Posterior vena cava (tissue), 2 donors: ENCODE measurements at regions of chr9 and their contacts with region 1.

Region 1: DNA sequence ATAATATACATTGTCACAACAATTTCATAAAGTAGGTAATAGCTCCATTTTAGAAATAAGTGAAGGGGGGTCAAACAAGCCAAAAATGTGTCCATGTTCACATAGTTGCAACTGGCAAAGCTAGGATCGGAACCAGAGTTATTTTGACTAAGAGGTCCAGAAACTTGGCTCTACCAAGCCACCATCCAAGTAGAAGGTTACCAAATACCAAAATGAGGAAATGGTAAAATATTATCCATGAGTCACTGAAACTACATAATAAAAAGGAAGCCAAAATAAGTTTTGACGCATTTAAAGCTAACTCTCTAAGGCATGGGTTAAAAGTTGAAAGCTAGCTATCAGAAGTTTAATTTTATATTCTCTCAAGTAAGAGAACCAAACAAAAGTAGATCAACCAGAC is 886.9 kb upstream of the DMAC1 start:
- DNase-seq: no peak

Region 2: GRCh38 chr9:8622871-8623270 is 63.6 kb before region 1 on chr9:
- intact Hi-C with region 1: loop called in 1 of 2 experiments (anchors 2 kb)
- DNase-seq: no peak

Region 3: GRCh38 chr9:8762479-8763085 is 76.1 kb after region 1 on chr9:
- intact Hi-C with region 1: no loop called
- DNase-seq: no peak